Ovary (tissue), 10 donors: ENCODE measurements at regions of chr22 and their contacts with region 1.

Region 1: GRCh38 chr22:50341977-50342650 is 1.0 kb upstream of the PPP6R2 start:
- DNase-seq: peak; percentile 86 to 93 (median 90)
- H3K4me3 ChIP-seq: peak overlapping the region; percentile 93
- H3K27ac ChIP-seq: peak overlapping the region in 1 of 2 donors; percentile 29
- H3K4me1 ChIP-seq: peaks cover 4% of the 10 kb centered on the region
- H3K27me3 ChIP-seq: no peaks in the 10 kb centered on the region
- CTCF ChIP-seq: peak; percentile 92 to 96 (median 92)
- EP300 ChIP-seq: no peak
- POLR2A ChIP-seq: no peak

Region 2: DNA sequence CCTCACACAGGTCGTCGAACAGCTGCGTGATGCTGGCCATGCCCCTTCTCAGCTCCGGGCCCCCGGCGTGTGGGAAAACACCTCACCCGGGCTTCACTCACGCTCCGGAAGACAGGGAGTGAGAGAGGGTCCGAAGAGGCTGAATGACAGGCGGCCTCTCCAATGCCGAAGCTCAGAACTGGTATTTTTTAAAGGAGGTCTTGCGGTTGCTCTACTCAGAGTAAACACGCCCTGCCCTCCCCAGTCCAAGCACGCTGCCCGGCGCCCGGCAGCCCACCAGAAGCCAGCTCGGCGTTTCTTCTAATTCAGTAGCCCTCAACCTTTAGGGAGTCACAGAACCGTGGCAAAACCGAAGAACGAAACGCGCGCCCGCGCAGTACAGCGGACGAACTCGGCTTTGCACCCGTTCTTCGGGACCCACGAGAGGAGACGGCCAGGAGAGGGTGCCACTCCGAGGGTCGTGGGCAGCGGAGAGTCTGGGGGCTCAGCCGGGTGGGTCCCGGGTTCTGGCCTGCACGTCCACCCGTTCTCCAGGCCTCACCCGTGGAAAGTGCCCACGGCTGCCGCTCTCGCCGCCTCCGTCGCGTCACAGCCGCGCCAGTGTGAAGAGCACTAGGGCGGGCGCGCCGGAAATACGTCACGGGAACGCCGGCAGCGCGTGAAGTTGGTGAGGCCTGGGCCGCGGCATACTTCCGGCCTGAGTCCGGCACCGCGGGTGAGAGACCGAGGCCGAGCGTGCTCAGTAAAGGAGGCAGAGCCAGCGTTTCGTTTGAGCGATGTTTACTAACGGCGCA is 97.5 kb before region 1 on chr22 and contains the start of gene TUBGCP6:
- intact Hi-C with region 1: loop called in 1 of 4 experiments (anchors 5 kb)
- DNase-seq: peak; percentile 92 to 97 (median 95)
- H3K4me3 ChIP-seq: peak within 1 kb of the TSS; percentile 71
- H3K27ac ChIP-seq: peak within 1 kb of the TSS; percentile 50 to 82
- H3K4me1 ChIP-seq: peaks cover 10% of the 10 kb centered on the region
- H3K27me3 ChIP-seq: no peaks in the 10 kb centered on the region
- CTCF ChIP-seq: peak in 1 of 3 donors; percentile 66
- EP300 ChIP-seq: no peak
- POLR2A ChIP-seq: peak; percentile 91
- total RNA-seq, gene TUBGCP6: 35.9 to 52.2 (median 40.8) TPM

Region 3: DNA sequence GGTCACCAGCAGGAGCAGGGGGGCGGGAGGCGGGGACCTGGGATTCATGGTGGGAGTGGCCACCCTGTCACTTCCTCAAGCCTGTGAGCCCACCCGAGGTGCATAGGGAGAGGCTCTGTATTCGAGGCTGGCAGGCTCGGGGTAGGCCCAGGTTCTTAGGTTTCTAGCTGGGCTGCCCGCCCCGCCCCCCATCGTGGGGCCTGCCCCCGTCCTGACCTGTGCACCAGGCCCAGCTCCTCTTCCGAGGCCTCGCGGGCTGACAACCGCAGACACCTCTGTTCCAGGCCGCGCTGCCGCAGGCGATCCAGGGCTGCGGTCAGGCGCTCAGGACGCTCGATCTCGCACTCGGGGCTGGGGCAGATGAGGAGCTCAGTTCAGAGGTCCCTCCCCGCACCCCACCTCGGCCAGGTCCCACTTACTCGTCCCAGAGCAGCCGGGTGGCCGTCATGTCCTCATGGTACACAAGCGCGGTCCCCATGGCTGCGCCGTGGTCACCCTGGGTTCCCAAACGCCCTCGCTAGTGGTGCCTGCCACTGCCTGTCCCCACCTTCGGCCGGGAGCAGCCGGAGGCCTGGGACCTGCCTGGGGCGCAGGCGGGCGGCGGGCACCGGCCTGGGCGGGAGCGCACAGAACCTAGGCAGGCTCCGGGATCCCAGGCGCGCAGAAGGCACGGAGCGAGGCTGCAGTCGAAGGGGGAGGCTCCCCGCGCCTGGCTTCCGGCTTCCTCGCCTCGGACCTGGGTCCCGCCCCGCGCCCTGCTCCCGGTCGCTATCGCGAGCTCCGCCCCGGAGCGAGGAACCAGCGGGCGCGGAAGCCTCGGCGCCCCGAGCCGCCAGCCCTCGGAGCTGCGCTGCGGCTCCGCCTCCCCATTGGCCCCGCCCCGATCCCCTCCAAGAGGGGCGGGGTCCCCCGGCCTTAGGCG is 91.3 kb before region 1 on chr22 and contains the start of gene HDAC10:
- intact Hi-C with region 1: loop called in 2 of 4 experiments (anchors 5 kb)
- DNase-seq: peak; percentile 75 to 88 (median 81)
- H3K4me3 ChIP-seq: peak within 1 kb of the TSS; percentile 57
- H3K27ac ChIP-seq: peak within 1 kb of the TSS; percentile 2 to 44
- H3K4me1 ChIP-seq: peaks cover 7% of the 10 kb centered on the region
- H3K27me3 ChIP-seq: no peaks in the 10 kb centered on the region
- CTCF ChIP-seq: no peak
- EP300 ChIP-seq: no peak
- POLR2A ChIP-seq: no peak
- total RNA-seq, gene HDAC10: 24.9 to 44.6 (median 41.1) TPM

Region 4: DNA sequence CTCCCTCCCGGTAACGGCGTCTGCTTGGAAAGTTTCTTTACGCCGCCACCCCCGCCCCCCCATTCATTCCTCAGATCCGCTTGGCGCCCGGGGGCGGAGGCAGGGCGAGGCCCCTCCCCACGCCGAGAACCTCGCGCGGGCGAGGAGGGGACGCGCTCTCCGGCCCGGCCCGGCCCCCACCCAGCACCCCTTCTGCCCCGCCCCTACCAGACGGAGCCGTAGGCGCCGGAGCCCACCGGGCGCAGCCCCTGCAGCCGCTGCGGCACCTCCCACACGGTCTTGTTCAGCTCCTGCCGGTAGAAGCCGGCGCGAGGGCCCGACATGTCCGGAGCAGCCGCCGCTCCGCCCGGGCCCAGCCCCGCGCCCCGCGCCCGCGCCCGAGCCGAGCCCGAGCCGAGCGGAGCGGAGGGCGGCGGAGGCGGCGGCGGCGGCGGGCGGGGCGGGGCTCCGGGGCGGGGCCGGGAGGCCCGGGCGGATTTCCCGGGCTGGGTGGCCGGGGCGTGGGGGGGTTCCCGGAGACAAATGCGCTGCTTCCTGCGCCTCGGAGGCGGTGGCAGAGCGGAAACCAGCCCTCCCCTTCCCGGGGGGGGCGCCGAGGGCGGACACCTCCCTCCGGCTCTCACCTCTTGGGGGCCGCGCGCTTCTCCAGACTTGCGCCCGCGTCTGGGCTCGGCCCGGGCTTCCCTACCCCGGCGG is 72.0 kb before region 1 on chr22 and contains the start of gene MAPK11:
- intact Hi-C with region 1: loop called in 2 of 4 experiments (anchors 5 kb)
- DNase-seq: peak; percentile 54 to 80 (median 69)
- H3K4me3 ChIP-seq: peak within 1 kb of the TSS; percentile 45
- H3K27ac ChIP-seq: peak within 1 kb of the TSS; percentile 1 to 55
- H3K4me1 ChIP-seq: peaks cover 26% of the 10 kb centered on the region
- H3K27me3 ChIP-seq: no peaks in the 10 kb centered on the region
- CTCF ChIP-seq: no peak
- EP300 ChIP-seq: no peak
- POLR2A ChIP-seq: no peak
- total RNA-seq, gene MAPK11: 2.0 to 31.6 (median 12.0) TPM

Region 5: DNA sequence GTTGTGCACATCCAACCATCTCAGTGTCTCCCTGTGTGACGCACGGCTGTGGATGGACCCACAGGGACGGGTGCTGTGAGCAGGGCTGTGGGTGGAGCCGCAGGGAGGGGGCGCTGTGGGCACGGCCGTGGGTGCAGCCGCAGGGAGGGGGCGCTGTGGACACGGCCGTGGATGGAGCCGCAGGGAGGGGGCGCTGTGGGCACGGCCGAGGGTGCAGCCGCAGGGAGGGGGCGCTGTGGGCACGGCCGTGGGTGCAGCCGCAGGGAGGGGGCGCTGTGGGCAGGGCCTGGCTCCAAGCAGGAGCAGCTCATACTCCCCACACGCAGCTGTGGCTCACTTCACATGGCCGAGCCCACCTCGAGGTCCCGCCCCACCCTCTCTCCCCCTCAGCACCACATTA is 66.0 kb before region 1 on chr22:
- intact Hi-C with region 1: loop called in 1 of 4 experiments (anchors 5 kb)
- DNase-seq: peak in 3 of 5 donors; percentile 50 to 72 (median 67)
- H3K4me3 ChIP-seq: no peak overlapping the region
- H3K27ac ChIP-seq: no peak overlapping the region
- H3K4me1 ChIP-seq: peaks cover 2% of the 10 kb centered on the region
- H3K27me3 ChIP-seq: no peaks in the 10 kb centered on the region
- CTCF ChIP-seq: no peak
- EP300 ChIP-seq: no peak
- POLR2A ChIP-seq: no peak

Region 6: GRCh38 chr22:50396751-50397370 is 54.7 kb after region 1 on chr22:
- intact Hi-C with region 1: no loop called
- DNase-seq: no peak
- H3K4me3 ChIP-seq: no peak overlapping the region
- H3K27ac ChIP-seq: no peak overlapping the region
- H3K4me1 ChIP-seq: no peaks in the 10 kb centered on the region
- H3K27me3 ChIP-seq: no peaks in the 10 kb centered on the region
- CTCF ChIP-seq: no peak
- EP300 ChIP-seq: no peak
- POLR2A ChIP-seq: no peak